ENCODE measurements at regions of chr14 and their contacts with region 1.

Region 1: DNA sequence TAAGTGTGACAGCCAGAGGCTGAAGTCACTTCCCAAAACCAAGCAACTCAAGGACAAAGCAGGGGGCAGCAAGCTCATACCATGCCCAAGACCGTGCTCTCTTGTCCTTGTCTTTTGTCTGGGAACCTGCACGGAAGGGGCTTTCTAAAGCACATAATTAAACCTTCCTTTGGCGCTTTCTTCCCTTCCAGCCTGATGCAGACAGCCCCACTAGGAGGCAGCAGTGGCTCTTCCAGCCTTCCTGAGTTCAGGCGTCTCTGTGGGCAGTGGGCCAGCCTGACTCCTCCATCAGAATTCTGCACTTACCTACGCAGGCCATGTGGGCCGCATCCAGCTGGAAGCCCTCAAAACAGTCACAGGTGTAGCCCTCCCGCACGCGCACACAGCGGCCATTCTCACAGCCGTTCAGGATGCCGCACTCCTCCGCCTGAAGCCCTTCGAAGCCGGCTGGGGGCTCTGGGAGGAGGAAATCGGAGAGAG is 7.6 kb downstream of the ISCA2 start:
- DNase-seq: peak; percentile 83
- ATAC-seq: peak; percentile 79
- H3K4me3 ChIP-seq: no peak overlapping the region
- H3K27ac ChIP-seq: no peak overlapping the region
- H3K4me1 ChIP-seq: peaks cover 3% of the 10 kb centered on the region; the same call in 1 of the 2 replicates
- H3K27me3 ChIP-seq: no peaks in the 10 kb centered on the region
- CTCF ChIP-seq: peak; percentile 91
- POLR2A ChIP-seq: no peak
- RAD21 ChIP-seq: peak; percentile 87

Region 2: GRCh38 chr14:74671789-74672188 is 170.6 kb after region 1 on chr14:
- CTCF ChIA-PET with region 1: no interaction called
- POLR2A ChIA-PET with region 1: no interaction called
- dilution Hi-C with region 1: no loop called
- in situ Hi-C with region 1: no loop called
- intact Hi-C with region 1: loop called (anchors 1 kb)
- DNase-seq: peak; percentile 79
- ATAC-seq: peak; percentile 65
- H3K4me3 ChIP-seq: no peak overlapping the region
- H3K27ac ChIP-seq: peak overlapping the region; percentile 50; the same call in 1 of the 2 replicates
- H3K4me1 ChIP-seq: peaks cover 6% of the 10 kb centered on the region
- H3K27me3 ChIP-seq: no peaks in the 10 kb centered on the region
- CTCF ChIP-seq: no peak
- POLR2A ChIP-seq: no peak
- RAD21 ChIP-seq: no peak

Region 3: DNA sequence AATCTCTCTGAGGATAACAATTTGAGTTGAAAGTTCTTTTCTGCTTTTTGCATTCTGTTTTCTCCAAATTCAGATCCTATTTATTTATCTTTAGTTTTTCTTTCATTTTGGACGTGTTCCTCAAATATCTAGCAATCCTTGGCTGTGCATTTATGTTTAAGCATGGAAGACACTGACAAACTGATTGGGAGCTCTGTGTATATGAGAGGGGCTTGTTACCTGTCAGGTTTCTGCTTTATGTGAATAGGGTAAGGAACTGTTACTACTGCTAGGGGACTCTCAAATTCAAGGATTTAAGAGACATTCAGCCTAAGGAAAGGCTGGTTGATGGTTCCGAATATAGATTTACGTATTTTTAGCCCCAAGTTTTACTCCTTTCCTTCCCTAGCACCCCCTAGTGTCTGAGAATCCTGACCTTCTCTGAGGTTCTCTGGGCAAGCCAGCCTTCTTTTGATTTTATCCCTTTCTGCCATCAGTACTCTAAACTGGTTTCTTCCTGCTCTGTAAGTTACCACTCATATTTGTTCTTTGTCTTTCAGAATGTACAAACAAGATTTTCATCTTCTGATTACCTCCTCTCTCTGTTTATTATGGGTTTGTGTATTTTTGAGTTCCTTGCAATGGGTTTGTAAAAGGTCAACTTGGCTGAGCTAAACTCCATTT is 292.5 kb after region 1 on chr14:
- CTCF ChIA-PET with region 1: no interaction called
- POLR2A ChIA-PET with region 1: no interaction called
- dilution Hi-C with region 1: no loop called
- in situ Hi-C with region 1: loop called (anchors 10 kb)
- intact Hi-C with region 1: no loop called
- DNase-seq: no peak
- ATAC-seq: no peak
- H3K4me3 ChIP-seq: no peak overlapping the region
- H3K27ac ChIP-seq: no peak overlapping the region
- H3K4me1 ChIP-seq: peaks cover 10% of the 10 kb centered on the region
- H3K27me3 ChIP-seq: no peaks in the 10 kb centered on the region
- CTCF ChIP-seq: peak; percentile 26; the same call in 1 of the 2 replicates
- POLR2A ChIP-seq: no peak
- RAD21 ChIP-seq: no peak

Region 4: DNA sequence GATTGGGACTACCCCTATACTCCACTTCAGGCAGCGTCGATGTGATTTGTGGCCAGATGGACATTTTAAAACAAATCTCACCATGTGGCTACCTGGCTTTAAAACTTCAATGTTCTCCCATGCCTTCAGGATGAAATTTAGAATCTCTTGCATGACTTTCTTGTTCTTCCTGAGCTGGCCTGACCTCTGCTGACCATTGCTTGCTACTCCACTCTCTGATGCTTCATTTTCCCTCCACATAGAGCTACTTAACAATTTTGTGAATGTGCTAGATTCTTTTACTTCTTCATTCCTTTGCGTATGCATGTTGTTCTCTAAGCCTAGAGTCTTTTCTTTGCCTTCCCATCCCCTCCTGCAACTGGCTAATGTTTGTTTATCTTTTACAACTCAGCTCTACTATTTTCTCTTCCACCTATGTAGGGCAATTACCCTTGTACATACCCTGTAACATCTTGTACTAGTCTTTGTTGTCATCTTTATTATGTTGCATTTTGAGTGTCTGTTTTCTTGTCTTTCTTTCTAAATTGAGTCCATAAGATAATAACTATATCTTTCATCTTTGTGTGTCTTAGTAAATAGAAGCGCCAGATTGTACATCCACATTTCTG is 303.1 kb after region 1 on chr14:
- CTCF ChIA-PET with region 1: interaction called, 3 read pairs
- POLR2A ChIA-PET with region 1: no interaction called
- dilution Hi-C with region 1: no loop called
- in situ Hi-C with region 1: loop called (anchors 10 kb)
- intact Hi-C with region 1: loop called (anchors 1 kb)
- DNase-seq: peak; percentile 70
- ATAC-seq: peak; percentile 94
- H3K4me3 ChIP-seq: no peak overlapping the region
- H3K27ac ChIP-seq: no peak overlapping the region
- H3K4me1 ChIP-seq: no peaks in the 10 kb centered on the region
- H3K27me3 ChIP-seq: no peaks in the 10 kb centered on the region
- CTCF ChIP-seq: peak; percentile 73
- POLR2A ChIP-seq: no peak
- RAD21 ChIP-seq: peak; percentile 81

Measured in IMR-90 (cell line).